ENCODE measurements at regions of chr5 and their contacts with region 1.

Region 1: DNA sequence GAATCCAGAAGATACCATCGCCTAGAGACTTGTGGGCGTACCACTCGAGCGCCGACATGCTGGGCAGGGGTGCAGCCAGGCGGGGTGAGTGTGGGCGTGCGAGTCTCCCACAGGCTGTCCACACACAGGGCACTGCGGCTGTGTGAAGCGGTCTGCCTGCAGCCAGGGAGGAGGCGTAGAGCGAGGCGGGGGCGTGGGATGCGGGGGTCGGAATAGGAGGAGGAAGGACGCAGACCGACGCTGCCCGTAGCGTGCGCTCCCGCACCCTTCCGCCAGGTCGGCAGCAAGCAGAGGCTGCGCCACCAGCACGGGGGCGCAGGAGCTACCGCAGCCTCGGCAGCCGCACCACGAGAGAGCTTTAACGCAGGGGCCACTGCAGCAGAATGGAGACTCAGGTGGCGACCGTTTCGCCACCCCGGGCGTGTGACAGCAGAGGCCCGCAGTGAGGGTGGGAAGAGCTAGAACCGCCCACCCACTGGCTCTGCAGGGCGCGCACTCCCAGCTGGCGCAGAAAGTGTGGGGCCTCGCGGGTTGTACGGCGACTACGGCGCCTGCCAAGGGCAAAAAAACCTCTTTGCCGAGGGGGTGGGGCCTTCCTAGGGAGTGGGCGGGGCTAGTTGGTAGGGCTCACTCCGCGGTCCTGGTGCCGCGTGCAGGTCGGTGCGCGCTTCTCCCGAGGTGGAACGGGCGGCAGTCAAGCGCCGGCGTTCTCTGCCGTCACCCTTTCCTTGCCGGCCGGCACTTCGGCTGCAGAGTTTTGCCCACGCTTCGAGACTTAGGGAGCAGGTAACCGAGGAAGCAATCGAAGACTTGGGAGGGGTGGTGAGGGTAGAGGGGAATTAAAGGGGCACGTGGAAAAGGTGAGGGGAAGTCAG is at the starts of genes MBLAC2 and POLR3G:
- DNase-seq: peak; percentile 80 to 93 (median 92)
- ATAC-seq: peak; percentile 95
- H3K4me3 ChIP-seq: peak within 1 kb of the TSS; percentile 95
- H3K4me3 Mint-ChIP-seq: peak within 1 kb of the TSS; percentile 90 to 99 (median 98)
- H3K27ac ChIP-seq: peak within 1 kb of the TSS; percentile 76
- H3K27ac Mint-ChIP-seq: peak within 1 kb of the TSS; percentile 86 to 98 (median 94)
- H3K4me1 ChIP-seq: peaks cover 15 to 16% of the 10 kb centered on the region in 2 donors
- H3K4me1 Mint-ChIP-seq: peaks cover 18 to 51% (median 43%) of the 10 kb centered on the region in 7 donors
- H3K27me3 ChIP-seq: no peaks in the 10 kb centered on the region
- H3K27me3 Mint-ChIP-seq: no peaks in the 10 kb centered on the region
- total RNA-seq, gene MBLAC2: 5.2 to 17.6 (median 7.1) TPM
- total RNA-seq, gene POLR3G: 0.51 to 3.0 (median 1.5) TPM

Region 2: GRCh38 chr5:90398726-90399125 is 75.7 kb before region 1 on chr5:
- CTCF ChIA-PET with region 1: no interaction called
- POLR2A ChIA-PET with region 1: no interaction called
- intact Hi-C with region 1: no loop called
- DNase-seq: no peak
- ATAC-seq: no peak
- H3K4me3 ChIP-seq: no peak overlapping the region
- H3K4me3 Mint-ChIP-seq: no peak overlapping the region
- H3K27ac ChIP-seq: no peak overlapping the region
- H3K27ac Mint-ChIP-seq: no peak overlapping the region
- H3K4me1 ChIP-seq: no peaks in the 10 kb centered on the region
- H3K4me1 Mint-ChIP-seq: peaks cover 6 to 17% (median 9%) of the 10 kb centered on the region in 7 donors
- H3K27me3 ChIP-seq: no peaks in the 10 kb centered on the region
- H3K27me3 Mint-ChIP-seq: no peaks in the 10 kb centered on the region

Region 3: GRCh38 chr5:90409318-90410177 is 64.9 kb before region 1 on chr5 and contains the start of gene CETN3:
- CTCF ChIA-PET with region 1: interaction called, 6 read pairs
- POLR2A ChIA-PET with region 1: interaction called, 49 read pairs
- intact Hi-C with region 1: loop called (anchors 1 kb)
- DNase-seq: peak; percentile 72 to 93 (median 88)
- ATAC-seq: peak; percentile 94
- H3K4me3 ChIP-seq: peak within 1 kb of the TSS; percentile 100
- H3K4me3 Mint-ChIP-seq: no peak within 1 kb of the TSS
- H3K27ac ChIP-seq: peak within 1 kb of the TSS; percentile 93
- H3K27ac Mint-ChIP-seq: no peak within 1 kb of the TSS
- H3K4me1 ChIP-seq: peaks cover 7 to 13% of the 10 kb centered on the region in 2 donors
- H3K4me1 Mint-ChIP-seq: peaks cover 12 to 26% (median 16%) of the 10 kb centered on the region in 7 donors
- H3K27me3 ChIP-seq: no peaks in the 10 kb centered on the region
- H3K27me3 Mint-ChIP-seq: peaks cover 0 to 4% (median 0%) of the 10 kb centered on the region in 5 donors
- total RNA-seq, gene CETN3: 4.4 to 31.0 (median 22.1) TPM

Region 4: GRCh38 chr5:90440644-90441043 is 33.8 kb before region 1 on chr5:
- CTCF ChIA-PET with region 1: interaction called, 6 read pairs
- POLR2A ChIA-PET with region 1: interaction called, 9 read pairs
- intact Hi-C with region 1: loop called (anchors 1 kb)
- DNase-seq: no peak
- ATAC-seq: no peak
- H3K4me3 ChIP-seq: no peak overlapping the region
- H3K4me3 Mint-ChIP-seq: peak overlapping the region in 7 of 10 donors; percentile 61 to 86 (median 84)
- H3K27ac ChIP-seq: no peak overlapping the region
- H3K27ac Mint-ChIP-seq: no peak overlapping the region
- H3K4me1 ChIP-seq: no peaks in the 10 kb centered on the region
- H3K4me1 Mint-ChIP-seq: peaks cover 0 to 12% (median 7%) of the 10 kb centered on the region in 7 donors
- H3K27me3 ChIP-seq: no peaks in the 10 kb centered on the region
- H3K27me3 Mint-ChIP-seq: peaks cover 0 to 18% (median 0%) of the 10 kb centered on the region in 5 donors

Region 5: DNA sequence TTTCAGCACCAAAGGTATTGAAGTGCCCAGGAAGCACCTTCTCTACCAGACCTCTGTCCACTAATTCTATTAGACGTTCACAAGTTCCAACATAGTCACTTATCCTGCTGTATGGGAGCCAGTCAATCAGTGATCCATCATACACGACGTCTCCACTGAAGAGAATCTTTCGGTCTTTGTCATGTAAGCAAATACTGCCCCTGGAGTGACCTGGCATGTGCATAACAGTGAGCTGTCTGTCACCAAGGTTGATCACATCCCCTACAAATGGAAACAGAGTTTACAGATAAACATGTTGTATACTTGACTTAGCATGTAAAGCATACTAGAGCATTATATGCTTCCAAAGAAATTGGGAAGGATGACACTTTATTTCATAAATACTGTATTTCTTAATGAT is 13.2 kb before region 1 on chr5:
- CTCF ChIA-PET with region 1: interaction called, 5 read pairs
- POLR2A ChIA-PET with region 1: interaction called, 7 read pairs
- intact Hi-C with region 1: loop called in 1 of 2 experiments (anchors 2 kb)
- DNase-seq: no peak
- ATAC-seq: no peak
- H3K4me3 ChIP-seq: no peak overlapping the region
- H3K4me3 Mint-ChIP-seq: no peak overlapping the region
- H3K27ac ChIP-seq: no peak overlapping the region
- H3K27ac Mint-ChIP-seq: no peak overlapping the region
- H3K4me1 ChIP-seq: no peaks in the 10 kb centered on the region
- H3K4me1 Mint-ChIP-seq: peaks cover 0 to 24% (median 11%) of the 10 kb centered on the region in 7 donors
- H3K27me3 ChIP-seq: no peaks in the 10 kb centered on the region
- H3K27me3 Mint-ChIP-seq: no peaks in the 10 kb centered on the region

Region 6: DNA sequence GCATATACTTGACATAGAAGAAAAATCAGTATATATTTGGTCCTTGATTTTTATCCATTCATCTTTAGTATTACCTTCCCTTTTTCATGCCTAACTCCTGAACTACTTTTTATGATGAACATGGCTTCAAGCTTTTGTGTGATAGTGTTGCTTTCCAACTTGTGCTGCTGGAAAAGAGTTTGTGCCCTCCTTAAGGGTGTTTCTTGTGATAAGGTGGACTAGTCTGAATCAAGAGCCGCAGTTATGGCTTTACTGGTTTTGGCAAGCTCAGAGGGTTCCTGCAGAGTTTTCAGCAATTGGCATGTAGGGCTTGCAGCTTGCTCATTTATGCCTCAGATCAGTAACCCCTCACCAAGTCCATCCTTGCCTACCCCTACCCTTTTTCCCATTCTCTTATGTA is 20.7 kb after region 1 on chr5:
- CTCF ChIA-PET with region 1: no interaction called
- POLR2A ChIA-PET with region 1: interaction called, 3 read pairs
- intact Hi-C with region 1: loop called in 1 of 2 experiments (anchors 1 kb)
- DNase-seq: no peak
- ATAC-seq: no peak
- H3K4me3 ChIP-seq: no peak overlapping the region
- H3K4me3 Mint-ChIP-seq: no peak overlapping the region
- H3K27ac ChIP-seq: no peak overlapping the region
- H3K27ac Mint-ChIP-seq: no peak overlapping the region
- H3K4me1 ChIP-seq: no peaks in the 10 kb centered on the region
- H3K4me1 Mint-ChIP-seq: peaks cover 0 to 2% (median 0%) of the 10 kb centered on the region in 7 donors
- H3K27me3 ChIP-seq: no peaks in the 10 kb centered on the region
- H3K27me3 Mint-ChIP-seq: no peaks in the 10 kb centered on the region